CD8-positive, alpha-beta T cell (primary cell): ENCODE measurements at regions of chr15 and their contacts with region 1.

Region 1: GRCh38 chr15:95291898-95292472 is 1038.5 kb upstream of the NR2F2 start:
- DNase-seq: peak in 2 of 9 experiments; percentile 33 to 42
- ATAC-seq: no peak
- H3K4me3 ChIP-seq: no peak overlapping the region
- H3K4me3 Mint-ChIP-seq: no peak overlapping the region
- H3K27ac ChIP-seq: no peak overlapping the region
- H3K27ac Mint-ChIP-seq: no peak overlapping the region
- H3K4me1 ChIP-seq: no peaks in the 10 kb centered on the region
- H3K4me1 Mint-ChIP-seq: no peaks in the 10 kb centered on the region
- H3K27me3 ChIP-seq: peaks cover 0 to 3% of the 10 kb centered on the region in 2 experiments
- H3K27me3 Mint-ChIP-seq: peaks cover 42% of the 10 kb centered on the region
- CTCF ChIP-seq: peak; percentile 43

Region 2: DNA sequence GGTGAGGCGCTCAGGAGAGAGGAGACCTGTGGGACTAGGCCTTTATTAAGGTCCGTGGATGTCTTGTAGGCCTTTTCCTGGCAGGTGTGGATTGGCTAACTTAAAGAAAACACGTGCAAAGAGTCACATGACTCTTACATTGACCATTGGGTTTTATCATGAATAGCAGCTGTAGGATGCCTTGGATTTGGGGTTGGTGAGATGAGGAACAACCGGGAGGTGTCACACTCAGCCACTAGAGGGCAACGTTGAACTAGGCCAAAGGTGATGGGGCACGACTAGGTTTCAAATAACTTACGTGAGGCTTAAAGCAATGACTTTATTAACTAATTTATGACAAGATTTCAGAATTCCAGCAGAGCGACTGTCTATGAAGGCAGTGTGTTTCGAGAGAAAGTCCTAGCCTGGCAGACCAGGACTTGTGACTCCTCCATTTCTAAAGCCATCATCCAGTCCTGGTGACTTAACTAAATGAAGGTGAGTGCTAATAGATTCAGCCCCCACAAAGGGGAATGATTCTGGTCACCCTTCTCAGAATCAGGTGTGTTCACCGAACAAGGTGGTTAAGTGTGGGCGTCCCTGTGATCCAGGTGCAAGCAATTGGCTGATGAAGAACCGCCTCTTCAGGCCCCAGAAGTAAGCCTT is 715.0 kb before region 1 on chr15:
- CTCF ChIA-PET with region 1: no interaction called
- POLR2A ChIA-PET with region 1: no interaction called
- intact Hi-C with region 1: loop called in 1 of 2 experiments (anchors 5 kb)
- DNase-seq: peak in 6 of 9 experiments; percentile 15 to 54 (median 22)
- ATAC-seq: no peak
- H3K4me3 ChIP-seq: no peak overlapping the region
- H3K4me3 Mint-ChIP-seq: no peak overlapping the region
- H3K27ac ChIP-seq: no peak overlapping the region
- H3K27ac Mint-ChIP-seq: no peak overlapping the region
- H3K4me1 ChIP-seq: no peaks in the 10 kb centered on the region
- H3K4me1 Mint-ChIP-seq: no peaks in the 10 kb centered on the region
- H3K27me3 ChIP-seq: peaks cover 0 to 6% of the 10 kb centered on the region in 2 experiments
- H3K27me3 Mint-ChIP-seq: peaks cover 58% of the 10 kb centered on the region
- CTCF ChIP-seq: peak; percentile 46

Region 3: GRCh38 chr15:94582369-94582768 is 709.6 kb before region 1 on chr15:
- CTCF ChIA-PET with region 1: no interaction called
- POLR2A ChIA-PET with region 1: no interaction called
- intact Hi-C with region 1: loop called in 1 of 2 experiments (anchors 5 kb)
- DNase-seq: peak in 4 of 9 experiments; percentile 4 to 54 (median 32)
- ATAC-seq: no peak
- H3K4me3 ChIP-seq: no peak overlapping the region
- H3K4me3 Mint-ChIP-seq: no peak overlapping the region
- H3K27ac ChIP-seq: no peak overlapping the region
- H3K27ac Mint-ChIP-seq: no peak overlapping the region
- H3K4me1 ChIP-seq: peaks cover 27% of the 10 kb centered on the region
- H3K4me1 Mint-ChIP-seq: peaks cover 38% of the 10 kb centered on the region
- H3K27me3 ChIP-seq: peaks cover 8 to 11% of the 10 kb centered on the region in 2 experiments
- H3K27me3 Mint-ChIP-seq: peaks cover 65% of the 10 kb centered on the region
- CTCF ChIP-seq: no peak

Region 4: GRCh38 chr15:96230465-96231181 is 938.6 kb after region 1 on chr15:
- CTCF ChIA-PET with region 1: no interaction called
- POLR2A ChIA-PET with region 1: no interaction called
- intact Hi-C with region 1: no loop called
- DNase-seq: no peak
- ATAC-seq: no peak
- H3K4me3 ChIP-seq: no peak overlapping the region
- H3K4me3 Mint-ChIP-seq: no peak overlapping the region
- H3K27ac ChIP-seq: no peak overlapping the region
- H3K27ac Mint-ChIP-seq: no peak overlapping the region
- H3K4me1 ChIP-seq: no peaks in the 10 kb centered on the region
- H3K4me1 Mint-ChIP-seq: no peaks in the 10 kb centered on the region
- H3K27me3 ChIP-seq: no peaks in the 10 kb centered on the region
- H3K27me3 Mint-ChIP-seq: no peaks in the 10 kb centered on the region
- CTCF ChIP-seq: no peak

Region 5: GRCh38 chr15:96261575-96262034 is 969.6 kb after region 1 on chr15:
- CTCF ChIA-PET with region 1: no interaction called
- POLR2A ChIA-PET with region 1: no interaction called
- intact Hi-C with region 1: no loop called
- DNase-seq: no peak
- ATAC-seq: no peak
- H3K4me3 ChIP-seq: no peak overlapping the region
- H3K4me3 Mint-ChIP-seq: no peak overlapping the region
- H3K27ac ChIP-seq: no peak overlapping the region
- H3K27ac Mint-ChIP-seq: no peak overlapping the region
- H3K4me1 ChIP-seq: no peaks in the 10 kb centered on the region
- H3K4me1 Mint-ChIP-seq: no peaks in the 10 kb centered on the region
- H3K27me3 ChIP-seq: no peaks in the 10 kb centered on the region
- H3K27me3 Mint-ChIP-seq: peaks cover 4% of the 10 kb centered on the region
- CTCF ChIP-seq: no peak